GM12878 (cell line): ENCODE measurements at regions of chr7 and their contacts with region 1.

Region 1: GRCh38 chr7:82319674-82320118 is 123.9 kb downstream of the CACNA2D1 start:
- DNase-seq: no peak
- ATAC-seq: peak; percentile 33
- H3K4me3 ChIP-seq: no peak overlapping the region
- H3K27ac ChIP-seq: no peak overlapping the region
- H3K4me1 ChIP-seq: no peaks in the 10 kb centered on the region
- H3K27me3 ChIP-seq: no peaks in the 10 kb centered on the region
- CTCF ChIP-seq: no peak
- EP300 ChIP-seq: no peak
- POLR2A ChIP-seq: no peak
- RAD21 ChIP-seq: no peak

Region 2: GRCh38 chr7:82273886-82274285 is 45.8 kb before region 1 on chr7:
- CTCF ChIA-PET with region 1: no interaction called
- POLR2A ChIA-PET with region 1: interaction called, 10 read pairs
- RAD21 ChIA-PET with region 1: no interaction called
- SMC1A ChIA-PET with region 1: interaction called, 3 read pairs
- in situ Hi-C with region 1: no loop called
- intact Hi-C with region 1: no loop called
- DNase-seq: no peak
- ATAC-seq: no peak
- H3K4me3 ChIP-seq: no peak overlapping the region
- H3K27ac ChIP-seq: no peak overlapping the region
- H3K4me1 ChIP-seq: no peaks in the 10 kb centered on the region
- H3K27me3 ChIP-seq: no peaks in the 10 kb centered on the region
- CTCF ChIP-seq: no peak
- EP300 ChIP-seq: no peak
- POLR2A ChIP-seq: no peak
- RAD21 ChIP-seq: no peak